CD4-positive, alpha-beta T cell (primary cell): ENCODE measurements at regions of chr1 and their contacts with region 1.

Region 1: GRCh38 chr1:209769171-209769904 is 13.5 kb downstream of the TRAF3IP3 start:
- DNase-seq: peak; percentile 31 to 91 (median 76)
- ATAC-seq: peak; percentile 77
- H3K4me3 ChIP-seq: peak overlapping the region; percentile 71
- H3K4me3 Mint-ChIP-seq: no peak overlapping the region
- H3K27ac ChIP-seq: peak overlapping the region; percentile 54 to 73
- H3K27ac Mint-ChIP-seq: no peak overlapping the region
- H3K4me1 ChIP-seq: peaks cover 77% of the 10 kb centered on the region
- H3K4me1 Mint-ChIP-seq: peaks cover 50% of the 10 kb centered on the region
- H3K27me3 ChIP-seq: no peaks in the 10 kb centered on the region
- H3K27me3 Mint-ChIP-seq: no peaks in the 10 kb centered on the region
- CTCF ChIP-seq: no peak

Region 2: GRCh38 chr1:209398313-209398991 is 370.9 kb before region 1 on chr1:
- CTCF ChIA-PET with region 1: no interaction called
- POLR2A ChIA-PET with region 1: no interaction called
- intact Hi-C with region 1: no loop called
- DNase-seq: peak in 2 of 14 experiments; percentile 4 to 13
- ATAC-seq: no peak
- H3K4me3 ChIP-seq: no peak overlapping the region
- H3K4me3 Mint-ChIP-seq: no peak overlapping the region
- H3K27ac ChIP-seq: no peak overlapping the region
- H3K27ac Mint-ChIP-seq: no peak overlapping the region
- H3K4me1 ChIP-seq: no peaks in the 10 kb centered on the region
- H3K4me1 Mint-ChIP-seq: no peaks in the 10 kb centered on the region
- H3K27me3 ChIP-seq: peaks cover 0 to 6% of the 10 kb centered on the region in 2 experiments
- H3K27me3 Mint-ChIP-seq: peaks cover 28% of the 10 kb centered on the region
- CTCF ChIP-seq: no peak

Region 3: GRCh38 chr1:209411491-209411929 is 357.8 kb before region 1 on chr1:
- CTCF ChIA-PET with region 1: no interaction called
- POLR2A ChIA-PET with region 1: no interaction called
- intact Hi-C with region 1: no loop called
- DNase-seq: peak in 2 of 14 experiments; percentile 0 to 2
- ATAC-seq: no peak
- H3K4me3 ChIP-seq: no peak overlapping the region
- H3K4me3 Mint-ChIP-seq: no peak overlapping the region
- H3K27ac ChIP-seq: no peak overlapping the region
- H3K27ac Mint-ChIP-seq: no peak overlapping the region
- H3K4me1 ChIP-seq: no peaks in the 10 kb centered on the region
- H3K4me1 Mint-ChIP-seq: no peaks in the 10 kb centered on the region
- H3K27me3 ChIP-seq: peaks cover 0 to 12% of the 10 kb centered on the region in 2 experiments
- H3K27me3 Mint-ChIP-seq: peaks cover 47% of the 10 kb centered on the region
- CTCF ChIP-seq: no peak

Region 4: GRCh38 chr1:209723756-209724693 is 45.3 kb before region 1 on chr1:
- CTCF ChIA-PET with region 1: no interaction called
- POLR2A ChIA-PET with region 1: interaction called, 20 read pairs
- intact Hi-C with region 1: no loop called
- DNase-seq: peak in 4 of 14 experiments; percentile 17 to 47 (median 39)
- ATAC-seq: peak; percentile 46
- H3K4me3 ChIP-seq: no peak overlapping the region
- H3K4me3 Mint-ChIP-seq: peak overlapping the region; percentile 42
- H3K27ac ChIP-seq: no peak overlapping the region
- H3K27ac Mint-ChIP-seq: peak overlapping the region; percentile 69
- H3K4me1 ChIP-seq: peaks cover 10% of the 10 kb centered on the region
- H3K4me1 Mint-ChIP-seq: peaks cover 32% of the 10 kb centered on the region
- H3K27me3 ChIP-seq: no peaks in the 10 kb centered on the region
- H3K27me3 Mint-ChIP-seq: no peaks in the 10 kb centered on the region
- CTCF ChIP-seq: no peak

Region 5: DNA sequence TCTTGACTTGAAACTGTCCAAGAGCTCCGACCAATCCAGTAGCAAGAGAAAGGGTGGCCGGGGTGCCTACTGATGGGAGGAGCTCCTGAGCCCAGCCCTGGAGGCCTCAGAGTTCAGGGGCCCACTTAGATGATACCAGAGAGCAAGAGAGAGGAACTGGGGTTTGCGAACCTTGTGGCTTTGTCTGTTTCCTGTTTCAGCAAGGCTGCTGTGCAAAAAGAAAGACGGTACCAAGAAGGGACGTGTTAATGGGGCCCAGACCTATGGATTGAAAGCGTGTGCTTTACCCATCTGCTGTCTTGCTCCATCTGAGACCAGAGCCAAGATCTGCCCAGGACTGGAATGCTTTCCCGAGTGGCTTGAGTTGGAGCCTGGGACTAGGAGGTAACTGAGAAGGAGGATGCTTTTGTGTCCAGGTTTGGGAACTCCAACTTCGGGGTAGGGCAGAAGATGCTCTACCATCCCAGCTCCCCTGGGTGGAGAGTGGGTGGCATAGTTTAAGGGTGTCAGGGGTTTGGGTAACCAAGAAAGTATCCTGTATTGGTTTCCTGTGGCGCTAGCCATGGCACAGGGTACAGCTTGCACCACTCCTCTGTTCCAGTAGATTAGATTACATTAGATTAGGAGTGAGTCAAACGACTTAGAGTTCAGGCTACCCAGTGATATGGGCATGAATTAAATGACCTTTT is 13.3 kb before region 1 on chr1 and contains the start of gene TRAF3IP3:
- CTCF ChIA-PET with region 1: interaction called, 80 read pairs
- POLR2A ChIA-PET with region 1: interaction called, 478 read pairs
- intact Hi-C with region 1: loop called (anchors 1 kb)
- DNase-seq: peak; percentile 60 to 92 (median 70)
- ATAC-seq: peak; percentile 91
- H3K4me3 ChIP-seq: peak within 1 kb of the TSS; percentile 68
- H3K4me3 Mint-ChIP-seq: peak within 1 kb of the TSS; percentile 88
- H3K27ac ChIP-seq: peak within 1 kb of the TSS; percentile 61 to 79
- H3K27ac Mint-ChIP-seq: peak within 1 kb of the TSS; percentile 89
- H3K4me1 ChIP-seq: peaks cover 77% of the 10 kb centered on the region
- H3K4me1 Mint-ChIP-seq: peaks cover 79% of the 10 kb centered on the region
- H3K27me3 ChIP-seq: no peaks in the 10 kb centered on the region
- H3K27me3 Mint-ChIP-seq: no peaks in the 10 kb centered on the region
- CTCF ChIP-seq: no peak
- total RNA-seq, gene TRAF3IP3: 279 to 290 TPM

Region 6: GRCh38 chr1:209784265-209785169 is 15.2 kb after region 1 on chr1 and contains the start of gene C1orf74:
- CTCF ChIA-PET with region 1: interaction called, 8 read pairs
- POLR2A ChIA-PET with region 1: interaction called, 245 read pairs
- intact Hi-C with region 1: loop called (anchors 1 kb)
- DNase-seq: peak; percentile 98 to 100 (median 99)
- ATAC-seq: peak; percentile 98
- H3K4me3 ChIP-seq: peak within 1 kb of the TSS; percentile 69
- H3K4me3 Mint-ChIP-seq: peak within 1 kb of the TSS; percentile 93
- H3K27ac ChIP-seq: peak within 1 kb of the TSS; percentile 74 to 94
- H3K27ac Mint-ChIP-seq: peak within 1 kb of the TSS; percentile 97
- H3K4me1 ChIP-seq: peaks cover 24% of the 10 kb centered on the region
- H3K4me1 Mint-ChIP-seq: peaks cover 28% of the 10 kb centered on the region
- H3K27me3 ChIP-seq: no peaks in the 10 kb centered on the region
- H3K27me3 Mint-ChIP-seq: peaks cover 17% of the 10 kb centered on the region
- CTCF ChIP-seq: no peak
- total RNA-seq, gene C1orf74: 0.63 to 0.67 TPM

Region 7: GRCh38 chr1:209827384-209828262 is 58.3 kb after region 1 on chr1 and contains the start of gene UTP25:
- CTCF ChIA-PET with region 1: interaction called, 16 read pairs
- POLR2A ChIA-PET with region 1: interaction called, 18 read pairs
- intact Hi-C with region 1: loop called in 1 of 2 experiments (anchors 5 kb)
- DNase-seq: peak; percentile 82 to 97 (median 90)
- ATAC-seq: peak; percentile 88
- H3K4me3 ChIP-seq: peak within 1 kb of the TSS; percentile 96
- H3K4me3 Mint-ChIP-seq: peak within 1 kb of the TSS; percentile 93
- H3K27ac ChIP-seq: peak within 1 kb of the TSS; percentile 62 to 89
- H3K27ac Mint-ChIP-seq: peak within 1 kb of the TSS; percentile 91
- H3K4me1 ChIP-seq: peaks cover 29% of the 10 kb centered on the region
- H3K4me1 Mint-ChIP-seq: peaks cover 50% of the 10 kb centered on the region
- H3K27me3 ChIP-seq: no peaks in the 10 kb centered on the region
- H3K27me3 Mint-ChIP-seq: peaks cover 7% of the 10 kb centered on the region
- CTCF ChIP-seq: peak; percentile 71
- total RNA-seq, gene UTP25: 6.0 to 6.4 TPM

Region 8: GRCh38 chr1:209911746-209912145 is 142.4 kb after region 1 on chr1:
- CTCF ChIA-PET with region 1: no interaction called
- POLR2A ChIA-PET with region 1: no interaction called
- intact Hi-C with region 1: no loop called
- DNase-seq: no peak
- ATAC-seq: no peak
- H3K4me3 ChIP-seq: no peak overlapping the region
- H3K4me3 Mint-ChIP-seq: no peak overlapping the region
- H3K27ac ChIP-seq: no peak overlapping the region
- H3K27ac Mint-ChIP-seq: no peak overlapping the region
- H3K4me1 ChIP-seq: no peaks in the 10 kb centered on the region
- H3K4me1 Mint-ChIP-seq: no peaks in the 10 kb centered on the region
- H3K27me3 ChIP-seq: no peaks in the 10 kb centered on the region
- H3K27me3 Mint-ChIP-seq: no peaks in the 10 kb centered on the region
- CTCF ChIP-seq: no peak